ENCODE measurements at regions of chrX and their contacts with region 1.

Region 1: DNA sequence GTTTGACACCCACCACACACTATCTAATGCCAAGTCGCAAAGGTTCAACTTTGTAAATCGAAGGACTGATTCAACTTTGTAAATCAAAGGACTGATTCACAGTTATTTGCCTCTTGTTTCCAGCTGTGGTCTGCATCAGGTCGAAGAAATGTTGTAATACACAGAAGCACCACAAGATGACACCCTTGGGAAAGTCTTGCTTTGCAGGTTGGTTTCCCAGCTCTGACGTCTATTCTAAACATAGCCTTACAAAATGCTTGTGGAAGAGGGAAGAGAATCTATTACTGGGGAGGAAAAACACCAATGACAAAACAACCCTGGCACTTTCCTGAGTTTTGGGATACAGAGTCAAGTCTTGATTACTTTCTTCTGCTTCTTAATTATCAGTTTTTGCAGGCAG is 35.3 kb downstream of the SUPT20HL1 start:
- DNase-seq: no peak
- ATAC-seq: peak; percentile 76

Region 2: GRCh38 chrX:24364851-24365538 is 30.8 kb before region 1 on chrX:
- intact Hi-C with region 1: no loop called
- DNase-seq: no peak
- ATAC-seq: peak; percentile 38

Region 3: DNA sequence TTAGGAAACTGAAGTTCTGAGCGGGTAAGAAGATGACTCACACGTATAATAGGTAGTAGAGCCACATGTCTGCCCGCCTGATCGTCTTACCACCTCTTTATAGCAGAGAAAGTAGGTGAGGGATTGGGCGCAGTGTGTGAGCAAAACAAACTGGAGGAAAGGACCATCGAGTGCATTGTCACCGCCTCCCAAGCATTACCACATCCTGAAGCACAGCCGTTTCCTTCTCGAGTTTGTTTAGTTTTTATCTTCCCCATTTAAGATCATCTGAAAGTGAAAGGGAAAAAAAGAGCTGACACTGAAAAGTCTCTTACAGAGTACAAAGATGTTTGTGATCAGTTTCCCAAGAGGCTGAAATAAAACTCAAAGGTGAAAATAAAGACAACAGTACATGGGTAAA is 84.1 kb after region 1 on chrX:
- intact Hi-C with region 1: loop called (anchors 10 kb)
- DNase-seq: no peak
- ATAC-seq: peak; percentile 61